Posterior cingulate gyrus (tissue), 11 donors: ENCODE measurements at regions of chr2 and their contacts with region 1.

Region 1: DNA sequence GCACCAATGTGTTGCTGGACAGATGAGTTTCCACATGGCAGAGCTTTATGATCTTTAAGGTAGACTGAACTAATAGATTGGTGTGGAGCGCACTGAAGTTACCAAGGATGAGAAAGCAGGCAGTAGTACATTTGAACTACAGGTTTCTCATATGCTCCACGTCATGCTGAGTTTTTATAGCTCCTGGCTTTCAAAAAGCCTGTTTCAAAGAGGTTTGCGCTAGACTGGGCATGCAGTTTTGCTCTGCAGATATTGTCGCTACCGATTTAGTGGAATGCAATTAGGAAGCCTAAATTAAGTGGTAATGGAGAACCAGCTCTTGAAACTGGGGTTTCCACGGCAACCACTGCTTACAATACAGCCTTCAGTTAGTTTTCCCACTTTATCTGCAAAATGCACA is 151.5 kb upstream of the POU3F3 start:
- DNase-seq: no peak

Region 2: GRCh38 chr2:104658144-104658835 is 44.2 kb before region 1 on chr2:
- intact Hi-C with region 1: loop called (anchors 5 kb)
- DNase-seq: peak in 9 of 10 donors; percentile 32 to 88 (median 50)

Region 3: GRCh38 chr2:104758199-104758620 is 55.8 kb after region 1 on chr2:
- intact Hi-C with region 1: loop called (anchors 10 kb)
- DNase-seq: peak in 3 of 10 donors; percentile 31 to 87 (median 79)

Region 4: DNA sequence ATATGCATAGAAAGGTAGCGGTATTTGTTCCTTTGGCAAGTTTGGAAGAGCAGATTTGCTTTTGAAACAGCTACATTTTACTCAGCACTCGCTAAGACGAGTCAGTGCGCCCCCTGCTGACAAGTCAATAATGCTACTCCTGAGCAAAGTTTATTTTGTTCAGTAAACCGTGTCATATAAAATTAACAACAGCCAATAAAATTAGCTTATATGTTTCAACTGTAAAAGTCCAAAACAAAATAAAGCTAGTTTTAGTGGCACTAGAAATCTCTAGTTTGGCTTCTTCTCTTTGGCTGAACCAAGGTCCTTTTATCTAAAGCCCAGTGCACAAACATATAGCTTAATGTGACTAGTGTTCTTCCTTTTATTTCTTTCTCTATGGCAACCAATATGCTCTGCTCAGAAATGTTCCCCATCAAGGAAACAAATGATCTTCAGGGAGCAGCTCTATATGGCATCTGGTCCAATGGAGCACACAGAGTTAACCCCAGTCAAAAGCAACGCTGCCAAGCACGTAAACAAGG is 147.2 kb after region 1 on chr2:
- intact Hi-C with region 1: loop called (anchors 5 kb)
- DNase-seq: peak in 9 of 10 donors; percentile 76 to 97 (median 90)